SK-N-SH (cell line): ENCODE measurements at regions of chr22 and their contacts with region 1.

Region 1: GRCh38 chr22:19295733-19296132 is 4.2 kb upstream of the CLTCL1 start:
- DNase-seq: no peak
- H3K4me3 ChIP-seq: no peak overlapping the region
- H3K27ac ChIP-seq: no peak overlapping the region
- H3K4me1 ChIP-seq: peaks cover 0 to 9% of the 10 kb centered on the region in 2 experiments; a peak in 2 of 4 replicates
- H3K27me3 ChIP-seq: no peaks in the 10 kb centered on the region
- CTCF ChIP-seq: no peak
- EP300 ChIP-seq: no peak
- RAD21 ChIP-seq: no peak

Region 2: DNA sequence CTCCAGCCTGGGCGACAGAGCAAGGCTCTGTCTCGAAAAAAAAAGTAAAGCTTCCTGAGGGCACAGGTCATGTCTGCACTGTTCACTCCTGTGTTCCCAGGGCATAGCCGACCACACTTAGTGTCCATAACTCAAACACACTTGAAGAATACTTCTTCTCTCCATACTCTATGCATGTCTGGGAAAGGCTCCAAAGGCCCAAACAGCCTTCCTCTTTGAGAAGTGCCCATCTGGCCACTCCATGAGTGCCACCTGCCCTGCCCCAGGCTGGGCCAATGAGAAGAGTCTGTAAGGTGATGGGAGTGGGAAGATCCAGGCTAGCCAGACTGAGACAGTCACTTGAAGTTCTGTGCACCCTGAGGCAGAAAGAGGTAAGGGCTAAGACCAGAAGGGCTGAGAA is 198.2 kb before region 1 on chr22:
- CTCF ChIA-PET with region 1: no interaction called
- POLR2A ChIA-PET with region 1: no interaction called
- DNase-seq: no peak
- H3K4me3 ChIP-seq: no peak overlapping the region
- H3K27ac ChIP-seq: no peak overlapping the region
- H3K4me1 ChIP-seq: no peaks in the 10 kb centered on the region; a peak in 1 of 4 replicates
- H3K27me3 ChIP-seq: no peaks in the 10 kb centered on the region
- CTCF ChIP-seq: no peak
- EP300 ChIP-seq: no peak
- RAD21 ChIP-seq: no peak

Region 3: GRCh38 chr22:19330865-19331418 is 35.2 kb after region 1 on chr22:
- CTCF ChIA-PET with region 1: no interaction called
- POLR2A ChIA-PET with region 1: no interaction called
- DNase-seq: no peak
- H3K4me3 ChIP-seq: no peak overlapping the region
- H3K27ac ChIP-seq: no peak overlapping the region
- H3K4me1 ChIP-seq: no peaks in the 10 kb centered on the region
- H3K27me3 ChIP-seq: no peaks in the 10 kb centered on the region
- CTCF ChIP-seq: no peak
- EP300 ChIP-seq: no peak
- RAD21 ChIP-seq: no peak

Region 4: GRCh38 chr22:19440411-19441195 is 144.9 kb after region 1 on chr22:
- CTCF ChIA-PET with region 1: no interaction called
- POLR2A ChIA-PET with region 1: no interaction called
- DNase-seq: no peak
- H3K4me3 ChIP-seq: no peak overlapping the region
- H3K27ac ChIP-seq: no peak overlapping the region
- H3K4me1 ChIP-seq: no peaks in the 10 kb centered on the region
- H3K27me3 ChIP-seq: no peaks in the 10 kb centered on the region
- CTCF ChIP-seq: no peak
- EP300 ChIP-seq: no peak
- RAD21 ChIP-seq: no peak

Region 5: DNA sequence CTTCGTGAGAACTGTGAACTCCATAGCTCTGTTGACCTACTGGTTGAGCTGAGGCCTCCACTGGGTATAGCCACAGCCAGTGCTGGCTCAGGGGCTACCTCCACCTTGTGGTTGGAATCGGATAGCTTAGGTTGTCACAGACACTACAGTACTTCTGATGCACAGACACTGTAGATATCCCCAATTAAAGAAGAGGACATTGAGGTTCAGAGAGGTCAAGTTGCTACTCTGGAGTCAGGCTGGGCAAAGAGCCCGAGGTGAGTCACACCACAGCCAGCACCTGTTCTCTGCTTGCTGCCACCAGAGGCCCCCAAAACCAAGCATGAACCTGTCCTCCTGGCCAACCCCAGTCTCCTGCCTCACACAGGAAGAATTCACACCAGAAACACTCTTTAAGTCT is 177.8 kb after region 1 on chr22:
- CTCF ChIA-PET with region 1: interaction called, 14 read pairs
- POLR2A ChIA-PET with region 1: no interaction called
- DNase-seq: no peak
- H3K4me3 ChIP-seq: no peak overlapping the region
- H3K27ac ChIP-seq: no peak overlapping the region
- H3K4me1 ChIP-seq: peaks cover 5 to 8% of the 10 kb centered on the region in 2 experiments; a peak in 3 of 4 replicates
- H3K27me3 ChIP-seq: no peaks in the 10 kb centered on the region
- CTCF ChIP-seq: no peak; the same call in 1 of the 2 replicates
- EP300 ChIP-seq: no peak
- RAD21 ChIP-seq: no peak

Region 6: GRCh38 chr22:19479357-19480172 is 183.8 kb after region 1 on chr22 and contains the start of gene CDC45:
- CTCF ChIA-PET with region 1: interaction called, 14 read pairs
- POLR2A ChIA-PET with region 1: no interaction called
- DNase-seq: peak; percentile 95
- H3K4me3 ChIP-seq: peak within 1 kb of the TSS; percentile 94 to 95
- H3K27ac ChIP-seq: peak within 1 kb of the TSS; percentile 95 to 99
- H3K4me1 ChIP-seq: peaks cover 5 to 16% of the 10 kb centered on the region in 2 experiments; a peak in 3 of 4 replicates
- H3K27me3 ChIP-seq: no peaks in the 10 kb centered on the region
- CTCF ChIP-seq: no peak
- EP300 ChIP-seq: no peak
- RAD21 ChIP-seq: no peak
- polyA plus RNA-seq, gene CDC45: 23.6 and 26.4 TPM in 2 replicates